ENCODE measurements at regions of chr1 and their contacts with region 1.

Region 1: DNA sequence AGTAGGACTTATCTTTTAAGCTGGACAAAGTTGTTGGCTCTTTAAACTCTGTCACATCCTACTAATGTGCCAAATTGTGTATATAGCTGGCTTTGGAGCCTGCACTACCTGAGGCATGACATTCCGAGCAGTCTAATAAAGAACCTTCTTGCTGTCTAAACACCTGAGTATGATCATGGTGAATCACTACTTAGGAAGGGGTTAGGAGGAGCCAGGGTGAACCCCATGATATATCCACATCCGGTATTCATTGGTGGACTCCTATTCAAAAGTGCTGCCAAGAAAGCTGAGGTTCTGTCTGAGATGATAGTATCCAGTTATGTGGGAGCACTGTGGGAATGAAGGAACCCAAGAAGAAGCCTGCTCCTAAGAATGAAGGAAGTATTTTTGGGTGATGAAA is 27.1 kb downstream of the CRNN start:
- DNase-seq: no peak

Region 2: GRCh38 chr1:152440635-152441471 is 53.9 kb after region 1 on chr1:
- intact Hi-C with region 1: no loop called
- DNase-seq: peak; percentile 86

Region 3: DNA sequence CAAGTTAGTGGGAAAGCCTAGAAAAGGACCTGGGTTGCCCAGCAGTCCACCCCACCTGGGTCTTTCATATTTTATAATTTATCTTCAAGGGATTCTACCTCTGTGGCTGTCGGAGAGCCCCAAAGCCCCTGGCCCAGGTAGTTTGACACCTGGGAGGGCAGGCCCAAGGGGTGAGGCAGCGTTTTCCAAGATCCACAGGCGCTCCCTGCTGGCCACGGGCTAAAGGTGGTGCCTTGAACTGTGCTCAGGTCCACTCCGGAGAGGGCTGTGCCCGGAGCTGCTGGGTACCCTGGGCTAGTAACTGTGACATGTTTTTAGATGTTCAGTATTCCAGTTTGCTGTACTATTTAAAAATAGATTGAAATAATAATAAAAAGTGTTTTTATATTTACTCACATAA is 64.3 kb after region 1 on chr1:
- intact Hi-C with region 1: loop called in 1 of 2 experiments (anchors 2 kb)
- DNase-seq: no peak